ENCODE measurements at regions of chr3 and their contacts with region 1.

Region 1: GRCh38 chr3:158434412-158435038 is 136.5 kb upstream of the MLF1 start:
- DNase-seq: peak; percentile 14
- H3K4me3 ChIP-seq: no peak overlapping the region
- CTCF ChIP-seq: peak; percentile 54

Region 2: DNA sequence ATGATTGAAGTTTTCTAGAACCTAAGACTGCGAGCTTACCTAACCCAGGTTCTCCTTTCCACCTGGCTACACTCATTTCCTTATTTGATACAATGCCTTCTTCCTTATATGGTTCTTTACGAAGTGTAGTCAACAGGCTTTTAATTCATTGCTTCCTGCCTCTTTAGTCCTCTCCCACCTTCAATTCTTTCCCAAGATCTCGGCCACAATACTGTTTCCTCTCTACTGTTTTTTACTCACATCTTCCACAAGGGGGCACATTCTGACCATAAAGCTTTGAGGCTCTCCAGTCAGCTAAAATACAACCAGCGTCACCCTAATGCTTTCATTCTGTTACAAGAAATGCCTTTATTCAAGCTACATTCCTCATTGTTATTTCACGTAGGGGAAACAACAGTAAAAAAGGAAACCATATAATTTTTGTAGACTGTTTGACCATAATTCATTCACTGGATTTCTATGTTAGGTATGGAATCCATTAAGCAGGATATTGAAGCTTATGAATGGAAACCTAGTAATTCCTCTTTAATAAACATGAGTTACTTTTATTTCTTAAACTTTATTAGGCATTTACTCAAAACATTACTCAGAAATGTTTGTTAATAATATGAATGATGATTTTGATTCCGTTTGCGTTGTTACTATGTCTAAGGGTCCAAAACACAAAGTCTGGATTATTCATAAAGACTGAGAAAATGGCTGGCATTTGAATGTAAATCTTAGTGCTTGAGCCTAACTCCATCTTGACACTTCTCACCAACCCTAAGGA is 901.8 kb before region 1 on chr3:
- CTCF ChIA-PET with region 1: interaction called, 28 read pairs
- POLR2A ChIA-PET with region 1: no interaction called
- DNase-seq: peak; percentile 71
- H3K4me3 ChIP-seq: peak overlapping the region; percentile 44
- CTCF ChIP-seq: peak; percentile 59

Region 3: GRCh38 chr3:158094235-158095110 is 340.1 kb before region 1 on chr3:
- CTCF ChIA-PET with region 1: interaction called, 13 read pairs
- POLR2A ChIA-PET with region 1: no interaction called
- DNase-seq: no peak
- H3K4me3 ChIP-seq: no peak overlapping the region
- CTCF ChIP-seq: no peak

Region 4: DNA sequence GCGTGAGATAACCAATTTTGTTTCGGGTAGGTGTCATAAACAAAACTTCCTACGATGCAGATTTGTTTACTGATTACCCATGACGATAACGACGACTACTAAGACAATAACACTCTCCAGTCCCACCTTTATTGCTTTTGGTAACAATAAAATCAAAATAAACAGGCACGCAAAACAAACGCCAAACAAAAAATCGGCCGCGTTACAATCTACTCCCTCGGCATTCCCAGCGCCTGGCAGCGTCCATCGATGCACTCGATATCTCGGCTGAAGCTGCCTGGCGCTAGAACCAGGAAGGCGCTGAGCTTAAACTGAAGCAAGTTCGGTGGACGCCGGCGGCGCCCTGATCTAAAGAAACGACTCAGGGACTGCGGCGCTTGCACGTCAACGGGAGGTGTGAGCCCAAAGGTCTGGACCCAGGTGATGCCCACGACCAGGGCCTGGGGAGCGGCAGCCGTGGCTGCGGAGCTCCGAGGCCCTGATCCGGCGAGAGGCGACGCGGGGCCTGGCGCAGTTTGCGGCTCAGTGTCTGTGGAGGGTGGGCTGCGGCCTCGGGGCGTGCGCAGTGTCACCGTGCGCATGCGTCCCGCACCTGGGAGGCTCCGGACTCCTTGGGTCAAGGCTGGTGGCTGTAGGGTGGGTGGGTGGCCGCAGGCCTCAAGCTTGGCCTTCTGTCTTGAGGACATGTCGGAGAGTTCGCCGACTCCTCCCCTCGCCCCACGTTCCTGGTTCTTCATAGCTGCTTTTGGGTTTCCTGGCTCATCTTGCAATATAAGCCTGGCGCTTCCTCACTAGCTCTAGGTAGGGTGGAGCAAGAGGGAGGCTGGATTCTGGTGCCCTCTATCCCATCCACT is 324.5 kb before region 1 on chr3 and contains the start of gene RSRC1:
- CTCF ChIA-PET with region 1: interaction called, 17 read pairs
- POLR2A ChIA-PET with region 1: interaction called, 5 read pairs
- DNase-seq: peak; percentile 65
- H3K4me3 ChIP-seq: peak within 1 kb of the TSS; percentile 92
- CTCF ChIP-seq: no peak

Region 5: GRCh38 chr3:158403013-158403412 is 31.5 kb before region 1 on chr3:
- CTCF ChIA-PET with region 1: interaction called, 11 read pairs
- POLR2A ChIA-PET with region 1: no interaction called
- DNase-seq: no peak
- H3K4me3 ChIP-seq: no peak overlapping the region
- CTCF ChIP-seq: no peak

Region 6: DNA sequence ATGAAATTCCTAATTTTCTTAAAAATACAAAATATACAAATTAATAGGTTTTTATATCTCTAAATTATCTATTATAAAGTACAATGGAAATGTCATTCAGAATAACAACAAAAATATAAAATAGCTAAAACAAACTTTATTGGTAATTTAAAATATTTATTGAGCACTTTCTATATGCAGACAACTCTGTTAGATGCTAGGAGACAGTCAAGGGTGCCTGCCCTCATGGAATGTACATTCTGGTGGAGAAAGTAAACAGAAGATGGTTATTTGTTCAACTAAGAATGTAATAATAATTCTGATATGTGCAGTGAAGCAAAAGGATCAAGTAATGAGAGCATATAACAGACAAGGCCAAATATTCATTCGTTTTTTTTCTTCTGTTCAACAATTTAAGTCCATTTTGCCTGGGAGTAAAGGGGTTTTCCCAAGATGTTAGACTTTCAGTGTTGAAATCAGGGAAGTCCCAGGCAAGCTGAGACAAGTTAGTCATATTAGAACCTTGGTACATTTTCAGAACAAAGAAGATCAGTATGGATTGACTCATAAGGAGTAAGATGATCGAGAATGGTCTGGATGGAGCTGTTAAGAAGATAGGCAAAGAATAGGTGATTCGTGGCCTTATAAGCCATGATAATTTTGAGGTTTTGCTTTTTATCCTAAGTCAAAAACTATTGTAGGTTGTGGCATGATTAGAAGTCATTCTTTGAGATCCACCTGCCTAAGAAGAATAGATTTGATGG is 13.7 kb before region 1 on chr3:
- CTCF ChIA-PET with region 1: interaction called, 17 read pairs
- POLR2A ChIA-PET with region 1: no interaction called
- DNase-seq: peak; percentile 77
- H3K4me3 ChIP-seq: no peak overlapping the region
- CTCF ChIP-seq: no peak

Region 7: GRCh38 chr3:158470944-158471638 is 36.6 kb after region 1 on chr3:
- CTCF ChIA-PET with region 1: no interaction called
- POLR2A ChIA-PET with region 1: no interaction called
- DNase-seq: peak; percentile 16
- H3K4me3 ChIP-seq: no peak overlapping the region
- CTCF ChIP-seq: no peak

Measured in AG04449 (cell line).